Vagina (tissue), 2 donors: ENCODE measurements at regions of chr4 and their contacts with region 1.

Region 1: GRCh38 chr4:16026160-16026761 is 57.6 kb downstream of the PROM1 start:
- DNase-seq: no peak
- H3K4me3 ChIP-seq: no peak overlapping the region
- H3K27ac ChIP-seq: no peak overlapping the region
- H3K4me1 ChIP-seq: no peaks in the 10 kb centered on the region
- H3K27me3 ChIP-seq: no peaks in the 10 kb centered on the region
- CTCF ChIP-seq: peak; percentile 26 to 94 (median 72)
- POLR2A ChIP-seq: no peak

Region 2: DNA sequence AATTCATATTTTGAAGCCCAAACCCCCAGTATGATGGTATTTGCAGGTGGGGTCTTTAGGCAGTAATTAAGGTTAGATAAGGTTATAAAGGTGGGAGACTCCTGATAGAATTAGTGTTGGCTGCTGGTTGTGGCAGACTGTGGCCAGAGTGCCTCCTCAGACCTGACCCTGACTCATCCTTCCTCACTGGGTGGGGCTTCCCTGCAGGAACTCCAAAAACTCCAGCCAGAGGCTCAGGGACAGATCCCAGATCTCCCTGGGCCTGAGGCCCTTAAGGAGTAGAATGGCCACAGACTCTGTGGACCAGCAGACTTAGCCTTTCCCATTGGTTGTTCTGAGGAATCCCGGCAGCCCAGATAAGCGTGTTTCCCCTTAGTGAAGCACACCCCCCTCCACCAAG is 1487.0 kb before region 1 on chr4:
- intact Hi-C with region 1: no loop called
- DNase-seq: no peak
- H3K4me3 ChIP-seq: no peak overlapping the region
- H3K27ac ChIP-seq: no peak overlapping the region
- H3K4me1 ChIP-seq: no peaks in the 10 kb centered on the region
- H3K27me3 ChIP-seq: no peaks in the 10 kb centered on the region
- CTCF ChIP-seq: no peak
- POLR2A ChIP-seq: no peak

Region 3: GRCh38 chr4:16264798-16265197 is 238.5 kb after region 1 on chr4:
- intact Hi-C with region 1: loop called (anchors 5 kb)
- DNase-seq: no peak
- H3K4me3 ChIP-seq: no peak overlapping the region
- H3K27ac ChIP-seq: no peak overlapping the region
- H3K4me1 ChIP-seq: no peaks in the 10 kb centered on the region
- H3K27me3 ChIP-seq: no peaks in the 10 kb centered on the region
- CTCF ChIP-seq: peak in 2 of 3 experiments; percentile 30 to 47
- POLR2A ChIP-seq: no peak

Region 4: DNA sequence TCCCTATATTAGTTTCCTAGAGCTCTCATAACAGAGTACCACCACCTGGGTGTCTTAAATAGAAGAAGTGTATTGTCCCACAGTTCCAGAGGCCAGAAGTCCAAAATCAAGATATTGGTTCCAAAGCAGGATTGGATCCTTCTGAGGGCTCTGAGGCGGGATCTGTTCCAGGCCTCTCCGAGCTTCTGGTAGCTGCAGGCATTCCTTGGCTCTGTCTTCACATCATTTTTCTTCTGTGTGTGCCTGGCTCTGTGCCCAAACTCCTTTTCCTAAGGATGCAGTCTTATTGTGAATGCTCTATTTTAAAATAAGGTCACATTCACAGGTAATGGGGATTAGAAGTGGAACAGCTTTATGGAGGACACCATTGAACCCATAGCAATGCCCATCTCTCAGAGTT is 453.8 kb after region 1 on chr4:
- intact Hi-C with region 1: no loop called
- DNase-seq: no peak
- H3K4me3 ChIP-seq: no peak overlapping the region
- H3K27ac ChIP-seq: no peak overlapping the region
- H3K4me1 ChIP-seq: no peaks in the 10 kb centered on the region
- H3K27me3 ChIP-seq: no peaks in the 10 kb centered on the region
- CTCF ChIP-seq: no peak
- POLR2A ChIP-seq: no peak